Caco-2 (cell line): ENCODE measurements at regions of chr13 and their contacts with region 1.

Region 1: DNA sequence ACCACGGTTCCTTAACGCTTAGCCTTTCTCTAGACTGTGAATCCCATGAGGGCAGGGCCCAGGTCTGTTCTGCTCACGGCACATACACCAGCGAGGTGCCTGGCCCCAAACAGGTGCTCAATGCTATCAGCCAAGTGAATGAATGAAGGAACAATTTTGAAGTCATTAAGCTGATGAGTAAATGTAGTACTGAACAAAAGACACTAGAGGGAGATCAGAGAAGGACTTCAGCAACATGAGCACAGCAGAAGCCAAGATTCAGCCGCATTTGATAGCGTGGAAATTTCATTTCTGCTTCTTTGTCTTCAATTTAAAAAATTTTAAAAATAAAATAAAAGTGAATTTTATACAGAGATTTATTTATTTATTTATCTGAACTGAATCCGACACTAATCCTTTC is 20.1 kb upstream of the MYO16 start:
- DNase-seq: no peak
- H3K4me3 ChIP-seq: no peak overlapping the region
- H3K4me3 Mint-ChIP-seq: no peak overlapping the region
- H3K27ac Mint-ChIP-seq: no peak overlapping the region
- H3K4me1 ChIP-seq: no peaks in the 10 kb centered on the region
- H3K4me1 Mint-ChIP-seq: no peaks in the 10 kb centered on the region
- H3K27me3 ChIP-seq: no peaks in the 10 kb centered on the region
- H3K27me3 Mint-ChIP-seq: no peaks in the 10 kb centered on the region
- CTCF ChIP-seq: peak in 1 of 2 experiments; percentile 50

Region 2: DNA sequence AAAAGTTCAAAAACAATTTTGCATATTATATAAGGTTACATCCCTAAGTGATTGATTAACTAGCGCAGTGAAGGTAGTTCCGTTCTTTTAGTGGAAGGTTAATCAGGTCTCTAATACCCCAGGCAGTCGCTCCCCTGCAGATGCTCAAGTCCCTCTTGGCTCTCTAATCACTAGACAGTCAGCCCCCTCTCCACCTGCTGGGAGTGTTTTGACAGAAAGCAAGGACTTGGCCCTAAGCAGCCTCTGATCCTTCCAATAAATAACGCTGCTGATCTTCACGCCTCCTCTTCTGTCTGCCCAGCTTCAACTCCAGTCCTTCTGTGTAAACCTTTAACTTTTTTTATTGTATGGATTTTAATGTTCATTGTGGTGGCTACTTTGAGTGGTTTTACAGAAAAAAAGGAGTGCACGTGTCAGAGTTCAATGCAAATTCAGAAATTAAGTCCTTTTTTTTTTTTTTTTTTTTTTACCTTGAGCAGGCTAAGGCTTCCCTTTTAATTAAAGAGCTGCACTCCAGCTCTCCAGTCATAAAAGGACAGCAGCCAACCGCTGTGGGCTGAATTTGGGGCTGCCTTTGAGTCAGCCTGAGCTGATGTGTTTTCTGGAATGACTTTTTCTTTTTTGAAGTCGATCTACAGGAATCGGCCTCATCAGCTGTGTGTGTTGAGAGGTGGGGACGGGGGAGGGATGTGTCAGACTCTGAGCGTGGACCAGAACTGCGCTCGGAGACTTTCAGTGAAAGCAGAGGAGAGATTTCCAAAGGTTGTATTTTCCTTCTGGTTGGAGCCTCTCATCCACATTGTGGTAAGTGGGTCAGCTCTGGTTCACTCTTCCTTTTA is 13.7 kb before region 1 on chr13:
- CTCF ChIA-PET with region 1: no interaction called
- POLR2A ChIA-PET with region 1: no interaction called
- intact Hi-C with region 1: no loop called
- DNase-seq: no peak
- H3K4me3 ChIP-seq: no peak overlapping the region
- H3K4me3 Mint-ChIP-seq: no peak overlapping the region
- H3K27ac Mint-ChIP-seq: no peak overlapping the region
- H3K4me1 ChIP-seq: no peaks in the 10 kb centered on the region
- H3K4me1 Mint-ChIP-seq: no peaks in the 10 kb centered on the region
- H3K27me3 ChIP-seq: no peaks in the 10 kb centered on the region
- H3K27me3 Mint-ChIP-seq: peaks cover 6% of the 10 kb centered on the region
- CTCF ChIP-seq: no peak

Region 3: DNA sequence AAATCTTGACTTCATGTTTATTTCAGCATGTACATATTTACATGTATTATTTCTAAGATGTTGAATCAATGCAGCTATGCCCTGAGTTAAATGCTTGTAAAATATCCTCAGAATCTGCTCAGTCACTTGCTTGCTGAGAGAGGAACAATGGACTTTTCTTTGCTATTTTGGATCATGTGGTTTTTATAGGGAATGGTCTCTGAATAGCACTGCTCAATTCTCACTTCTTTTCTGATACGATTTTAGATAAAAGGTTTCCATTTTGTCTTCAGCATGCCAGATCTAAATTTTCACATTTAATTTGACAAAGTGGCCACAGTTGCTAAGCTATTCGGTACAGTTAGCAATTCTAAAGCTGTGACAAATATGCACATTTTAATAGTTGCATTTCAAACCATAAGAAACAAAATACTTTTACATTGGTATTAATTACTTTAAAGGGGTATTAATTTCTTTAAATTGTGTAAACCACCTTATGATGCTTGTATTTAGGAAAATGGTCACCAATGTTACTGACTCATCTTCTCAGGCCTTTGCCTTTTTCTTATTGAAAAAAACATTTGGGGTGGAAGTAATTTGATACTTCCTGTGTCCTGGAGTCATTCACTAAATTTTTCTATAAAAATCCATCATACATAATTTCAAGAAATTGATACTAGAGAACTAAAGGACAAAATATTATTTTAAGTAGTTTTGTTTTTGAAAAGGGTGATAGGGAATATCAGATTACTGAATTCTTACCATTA is 133.5 kb after region 1 on chr13:
- CTCF ChIA-PET with region 1: no interaction called
- POLR2A ChIA-PET with region 1: no interaction called
- intact Hi-C with region 1: loop called (anchors 5 kb)
- DNase-seq: no peak
- H3K4me3 ChIP-seq: no peak overlapping the region
- H3K4me3 Mint-ChIP-seq: no peak overlapping the region
- H3K27ac Mint-ChIP-seq: no peak overlapping the region
- H3K4me1 ChIP-seq: no peaks in the 10 kb centered on the region
- H3K4me1 Mint-ChIP-seq: no peaks in the 10 kb centered on the region
- H3K27me3 ChIP-seq: no peaks in the 10 kb centered on the region
- H3K27me3 Mint-ChIP-seq: no peaks in the 10 kb centered on the region
- CTCF ChIP-seq: no peak